Mammary epithelial cell (primary cell): ENCODE measurements at regions of chr11 and their contacts with region 1.

Region 1: DNA sequence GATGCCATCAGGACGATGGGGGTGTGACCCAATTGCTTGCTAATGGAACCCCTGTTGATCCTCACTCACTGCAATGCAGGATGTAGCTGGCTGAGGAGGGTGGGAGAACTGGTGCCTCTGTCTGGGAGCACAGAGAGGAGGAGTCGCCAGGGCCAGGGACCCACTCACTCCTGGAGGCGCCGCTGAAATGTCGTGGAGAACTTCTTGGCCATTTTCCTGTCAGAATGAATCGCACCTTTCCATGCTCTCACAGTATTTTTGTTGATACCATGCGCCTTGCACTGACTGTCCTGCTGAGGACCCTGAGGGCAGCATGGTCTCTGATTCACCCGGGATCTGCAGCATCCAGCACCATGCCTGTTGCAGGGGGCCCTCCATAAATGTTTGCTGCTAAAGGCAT is 211.4 kb downstream of the DSCAML1 start:
- DNase-seq: no peak
- H3K4me3 ChIP-seq: no peak overlapping the region
- H3K27ac ChIP-seq: no peak overlapping the region
- H3K4me1 ChIP-seq: no peaks in the 10 kb centered on the region
- H3K27me3 ChIP-seq: no peaks in the 10 kb centered on the region
- CTCF ChIP-seq: no peak

Region 2: GRCh38 chr11:117572129-117572528 is 13.5 kb before region 1 on chr11:
- CTCF ChIA-PET with region 1: interaction called, 23 read pairs
- dilution Hi-C with region 1: no loop called
- in situ Hi-C with region 1: no loop called
- intact Hi-C with region 1: no loop called
- DNase-seq: no peak
- H3K4me3 ChIP-seq: no peak overlapping the region
- H3K27ac ChIP-seq: no peak overlapping the region
- H3K4me1 ChIP-seq: no peaks in the 10 kb centered on the region
- H3K27me3 ChIP-seq: no peaks in the 10 kb centered on the region
- CTCF ChIP-seq: no peak